ENCODE measurements at regions of chr2 and their contacts with region 1.

Region 1: DNA sequence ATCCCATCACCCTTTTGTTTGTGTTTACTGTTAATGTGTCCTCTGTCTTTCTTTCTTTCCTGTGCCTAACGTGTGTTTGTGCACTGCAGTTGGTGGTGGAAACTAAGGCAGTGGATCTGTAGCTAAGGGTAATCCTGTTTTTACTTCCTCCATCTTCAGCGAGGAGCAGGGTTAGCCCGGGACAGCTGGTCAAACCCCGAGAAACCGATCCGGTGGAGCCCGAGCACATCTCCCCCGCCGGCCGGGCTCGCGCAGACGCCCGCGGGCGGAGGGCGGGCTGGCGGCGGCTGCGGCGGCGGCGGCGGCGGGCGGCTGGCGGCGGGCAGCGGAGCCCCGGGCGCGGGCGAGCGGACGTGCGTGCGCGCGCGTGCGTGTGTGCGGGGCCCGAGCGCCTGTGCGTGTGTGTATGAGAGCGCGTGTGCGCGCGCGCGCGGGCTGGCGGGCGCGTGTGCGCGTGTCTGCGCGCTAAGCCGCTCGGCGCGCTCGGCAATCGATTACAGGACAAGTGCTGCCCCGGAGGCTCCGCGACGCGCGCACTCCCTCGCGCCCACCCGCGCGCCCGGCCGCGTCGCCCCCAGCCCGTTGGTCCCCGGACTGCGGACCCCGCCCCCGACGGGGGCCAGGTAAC is at the start of gene IKZF2:
- DNase-seq: peak; percentile 95
- H3K4me3 ChIP-seq: peak within 1 kb of the TSS; percentile 64 to 93 (median 76)
- H3K27ac ChIP-seq: peak within 1 kb of the TSS; percentile 87 to 96 (median 93)
- H3K4me1 ChIP-seq: peaks cover 5 to 58% (median 34%) of the 10 kb centered on the region in 6 donors
- H3K27me3 ChIP-seq: no peaks in the 10 kb centered on the region
- CTCF ChIP-seq: no peak
- POLR2A ChIP-seq: peak in 1 of 3 donors; percentile 56
- total RNA-seq, gene IKZF2: 14.3 to 43.4 (median 21.7) TPM

Region 2: DNA sequence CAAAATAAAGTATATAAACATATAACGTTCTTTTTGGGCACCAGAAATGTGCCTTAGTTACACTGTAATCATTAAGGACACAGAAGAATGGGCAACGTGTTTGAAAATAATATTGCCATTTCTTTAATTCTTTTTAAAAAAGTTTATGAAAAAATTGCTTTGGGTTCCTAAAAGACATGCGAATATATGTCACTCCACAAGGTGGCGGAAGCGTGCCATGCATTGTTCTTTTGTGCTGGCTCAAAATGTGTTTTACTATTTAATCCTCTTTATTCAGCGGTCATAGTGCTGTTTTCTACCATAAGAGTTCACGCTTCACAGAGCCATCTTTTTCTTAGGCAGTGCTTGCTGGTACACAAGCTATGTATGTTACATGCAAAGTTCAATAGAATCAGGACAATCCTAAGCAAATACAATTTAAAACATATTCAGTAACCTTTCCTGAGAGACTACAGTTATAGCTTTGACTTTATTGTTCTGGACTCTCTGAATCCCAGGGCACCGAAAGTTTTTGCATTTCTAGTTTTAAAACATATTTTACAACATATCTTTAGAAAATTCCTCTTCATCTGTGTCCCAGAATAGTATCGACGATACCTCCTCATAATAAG is 465.2 kb before region 1 on chr2:
- intact Hi-C with region 1: loop called (anchors 10 kb)
- DNase-seq: no peak
- H3K4me3 ChIP-seq: no peak overlapping the region
- H3K27ac ChIP-seq: no peak overlapping the region
- H3K4me1 ChIP-seq: peaks cover 0 to 4% (median 0%) of the 10 kb centered on the region in 6 donors
- H3K27me3 ChIP-seq: no peaks in the 10 kb centered on the region
- CTCF ChIP-seq: peak in 10 of 11 experiments; percentile 31 to 73 (median 59)
- POLR2A ChIP-seq: no peak

Region 3: DNA sequence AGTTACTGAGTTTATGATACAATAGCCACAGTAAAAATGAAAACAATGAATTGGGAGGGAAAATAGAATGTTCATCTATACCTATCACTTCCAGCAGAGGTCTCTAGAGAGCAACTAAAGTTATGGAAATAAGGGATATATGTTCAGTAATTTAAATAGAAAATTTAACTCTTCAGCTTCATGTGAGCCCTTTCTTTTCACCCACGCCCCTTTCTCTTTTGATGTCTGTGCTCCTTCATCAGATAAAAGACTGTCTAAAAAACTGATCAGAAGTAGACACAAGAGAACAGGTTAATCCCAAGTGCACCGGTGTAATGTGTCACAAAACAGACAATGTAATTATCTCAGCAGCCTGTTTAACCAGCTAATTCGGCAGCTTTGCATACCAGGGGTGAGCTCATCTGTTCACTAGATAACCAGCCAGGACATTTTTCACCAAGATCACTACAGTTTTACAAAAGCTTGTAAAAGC is 374.5 kb before region 1 on chr2:
- intact Hi-C with region 1: loop called (anchors 5 kb)
- DNase-seq: no peak
- H3K4me3 ChIP-seq: no peak overlapping the region
- H3K27ac ChIP-seq: no peak overlapping the region
- H3K4me1 ChIP-seq: no peaks in the 10 kb centered on the region
- H3K27me3 ChIP-seq: no peaks in the 10 kb centered on the region
- CTCF ChIP-seq: peak in 10 of 11 experiments; percentile 24 to 70 (median 58)
- POLR2A ChIP-seq: no peak